PC-9 (cell line): ENCODE measurements at regions of chr9 and their contacts with region 1.

Region 1: DNA sequence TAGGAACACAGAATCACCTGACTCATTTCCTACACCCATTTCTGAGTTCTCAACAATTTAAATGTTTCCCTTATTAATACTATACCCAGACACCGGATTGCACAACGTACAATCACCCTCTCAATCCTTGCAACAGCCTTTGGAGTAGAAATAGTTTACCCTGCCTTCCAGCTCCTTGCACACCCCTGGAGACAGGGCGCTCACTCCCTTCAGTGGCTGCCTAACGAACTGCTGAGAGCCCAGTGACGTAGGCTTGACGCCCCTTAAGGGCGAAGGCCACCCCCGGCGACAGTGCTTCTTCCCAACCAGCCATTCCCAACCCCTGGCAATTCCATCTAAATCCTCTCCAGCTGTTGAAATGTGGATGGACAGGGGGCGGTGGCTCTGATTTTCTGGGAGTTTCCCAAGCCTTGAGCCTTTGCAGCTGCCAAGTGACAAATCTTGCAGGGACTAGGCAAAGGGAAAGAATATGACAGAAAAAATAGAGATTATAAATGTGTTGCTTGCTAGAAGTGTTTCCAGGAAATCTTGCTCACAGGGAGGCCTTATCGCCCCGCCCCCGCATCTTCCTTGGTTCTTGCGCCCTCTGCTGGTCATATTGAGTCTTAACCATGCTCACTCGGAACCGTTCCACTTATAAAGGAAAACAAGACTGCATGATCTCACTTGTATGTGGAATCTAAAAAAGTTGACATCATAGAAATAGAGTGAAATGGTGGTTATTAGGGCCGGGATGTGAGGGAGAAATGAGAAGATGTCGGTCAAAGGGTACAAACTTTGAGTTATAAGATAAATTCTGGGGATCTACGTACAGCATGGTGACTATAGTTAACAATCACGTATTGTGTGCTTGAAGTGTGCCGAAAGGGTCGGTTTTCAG is 7.6 kb upstream of the BARX1 start:
- DNase-seq: peak; percentile 48 to 74
- H3K4me3 ChIP-seq: no peak overlapping the region
- H3K27ac ChIP-seq: no peak overlapping the region
- H3K4me1 ChIP-seq: no peaks in the 10 kb centered on the region
- H3K27me3 ChIP-seq: 0 out of 2 replicates have a peak, but pooled peaks cover 2% of the 10 kb centered on the region
- CTCF ChIP-seq: peak; percentile 88

Region 2: GRCh38 chr9:93566408-93567270 is 396.2 kb before region 1 on chr9:
- CTCF ChIA-PET with region 1: no interaction called
- POLR2A ChIA-PET with region 1: no interaction called
- intact Hi-C with region 1: loop called (anchors 10 kb)
- DNase-seq: peak; percentile 84 to 100
- H3K4me3 ChIP-seq: peak overlapping the region; percentile 77
- H3K27ac ChIP-seq: peak overlapping the region; percentile 66
- H3K4me1 ChIP-seq: peaks cover 11% of the 10 kb centered on the region
- H3K27me3 ChIP-seq: no peaks in the 10 kb centered on the region
- CTCF ChIP-seq: peak; percentile 90

Region 3: GRCh38 chr9:93827545-93828330 is 135.1 kb before region 1 on chr9:
- CTCF ChIA-PET with region 1: no interaction called
- POLR2A ChIA-PET with region 1: no interaction called
- intact Hi-C with region 1: loop called (anchors 2 kb)
- DNase-seq: peak in 1 of 2 experiments; percentile 57
- H3K4me3 ChIP-seq: no peak overlapping the region
- H3K27ac ChIP-seq: no peak overlapping the region
- H3K4me1 ChIP-seq: no peaks in the 10 kb centered on the region
- H3K27me3 ChIP-seq: peaks cover 40% of the 10 kb centered on the region
- CTCF ChIP-seq: peak; percentile 77

Region 4: GRCh38 chr9:94030318-94031179 is 67.7 kb after region 1 on chr9:
- CTCF ChIA-PET with region 1: no interaction called
- POLR2A ChIA-PET with region 1: no interaction called
- intact Hi-C with region 1: no loop called
- DNase-seq: peak; percentile 71 to 83
- H3K4me3 ChIP-seq: peak overlapping the region; percentile 64
- H3K27ac ChIP-seq: no peak overlapping the region
- H3K4me1 ChIP-seq: peaks cover 8% of the 10 kb centered on the region; the same call in 1 of the 2 replicates
- H3K27me3 ChIP-seq: no peaks in the 10 kb centered on the region
- CTCF ChIP-seq: no peak

Region 5: GRCh38 chr9:94213511-94214124 is 250.8 kb after region 1 on chr9:
- CTCF ChIA-PET with region 1: interaction called, 15 read pairs
- POLR2A ChIA-PET with region 1: no interaction called
- intact Hi-C with region 1: loop called (anchors 2 kb)
- DNase-seq: peak; percentile 60 to 65
- H3K4me3 ChIP-seq: no peak overlapping the region
- H3K27ac ChIP-seq: no peak overlapping the region
- H3K4me1 ChIP-seq: no peaks in the 10 kb centered on the region
- H3K27me3 ChIP-seq: no peaks in the 10 kb centered on the region
- CTCF ChIP-seq: peak; percentile 87